ENCODE measurements at regions of chr5 and their contacts with region 1.

Region 1: DNA sequence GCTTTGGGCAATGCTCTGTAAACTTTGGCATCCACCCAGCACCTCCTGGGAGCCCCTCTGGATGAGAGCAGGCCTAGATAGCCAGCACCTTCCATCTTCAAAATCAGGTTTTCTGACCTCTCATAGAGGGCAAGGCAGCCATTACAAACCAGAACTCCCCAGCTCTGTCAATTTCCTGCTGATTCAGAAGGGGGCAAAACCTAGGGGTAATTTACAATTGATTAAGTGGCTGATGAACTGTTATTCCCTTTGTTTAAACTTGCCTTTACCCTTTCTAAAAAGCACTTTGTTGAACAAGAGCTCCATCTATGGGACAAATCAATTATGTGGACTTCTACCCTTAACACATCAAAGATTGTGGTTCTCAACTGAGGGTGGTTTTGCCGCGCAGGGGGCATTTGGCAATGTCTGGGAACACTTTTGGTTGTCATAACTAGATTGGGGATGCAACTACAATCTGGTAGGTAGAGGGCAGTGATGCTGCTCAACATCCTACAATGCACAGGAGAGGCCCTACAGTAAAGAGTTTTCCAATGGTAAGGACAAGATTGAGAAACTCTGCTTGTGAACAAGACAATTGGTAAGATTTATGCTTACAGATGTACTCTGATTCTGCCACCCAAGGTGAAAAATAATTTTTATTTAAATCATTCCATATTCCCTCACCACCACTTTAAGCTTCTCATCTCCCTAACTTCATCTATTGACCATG is 184.1 kb downstream of the MARCHF11 start:
- DNase-seq: no peak
- H3K4me3 ChIP-seq: no peak overlapping the region
- H3K27ac ChIP-seq: no peak overlapping the region
- H3K4me1 ChIP-seq: no peaks in the 10 kb centered on the region
- H3K27me3 ChIP-seq: no peaks in the 10 kb centered on the region
- CTCF ChIP-seq: peak; percentile 35 to 48 (median 36)
- EP300 ChIP-seq: no peak
- POLR2A ChIP-seq: no peak

Region 2: GRCh38 chr5:15105796-15106393 is 889.6 kb before region 1 on chr5:
- intact Hi-C with region 1: loop called (anchors 5 kb)
- DNase-seq: no peak
- H3K4me3 ChIP-seq: no peak overlapping the region
- H3K27ac ChIP-seq: no peak overlapping the region
- H3K4me1 ChIP-seq: no peaks in the 10 kb centered on the region
- H3K27me3 ChIP-seq: no peaks in the 10 kb centered on the region
- CTCF ChIP-seq: peak; percentile 57 to 78 (median 71)
- EP300 ChIP-seq: no peak
- POLR2A ChIP-seq: no peak

Region 3: DNA sequence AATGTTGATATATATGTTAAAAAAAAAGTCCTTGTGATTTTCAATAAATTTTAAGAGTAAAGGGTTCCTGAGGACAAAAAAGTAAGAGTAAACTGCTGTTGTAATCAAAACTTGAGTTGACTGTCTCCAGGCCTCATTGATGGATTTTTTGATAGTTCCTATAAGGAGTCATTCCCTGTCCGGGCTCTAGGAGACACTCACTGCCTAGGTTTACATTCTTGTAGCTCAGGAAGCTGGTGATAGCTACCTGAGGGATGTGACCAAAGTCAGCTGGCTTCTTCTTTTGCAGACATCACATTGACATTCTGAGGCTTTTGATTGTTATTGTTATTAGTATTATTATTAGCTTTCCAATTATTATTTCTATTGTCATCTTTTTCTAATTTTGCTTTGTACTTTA is 612.0 kb before region 1 on chr5:
- intact Hi-C with region 1: loop called (anchors 10 kb)
- DNase-seq: no peak
- H3K4me3 ChIP-seq: no peak overlapping the region
- H3K27ac ChIP-seq: no peak overlapping the region
- H3K4me1 ChIP-seq: no peaks in the 10 kb centered on the region
- H3K27me3 ChIP-seq: no peaks in the 10 kb centered on the region
- CTCF ChIP-seq: peak; percentile 55 to 75 (median 67)
- EP300 ChIP-seq: no peak
- POLR2A ChIP-seq: no peak

Measured in esophagus muscularis mucosa (tissue), 4 donors.